Right ventricle myocardium superior (tissue), 1 donor: ENCODE measurements at regions of chr6 and their contacts with region 1.

Region 1: GRCh38 chr6:144013486-144013909 is 5.4 kb upstream of the PLAGL1 start:
- DNase-seq: peak; percentile 85
- ATAC-seq: peak; percentile 68

Region 2: GRCh38 chr6:143759666-143760065 is 253.8 kb before region 1 on chr6:
- intact Hi-C with region 1: no loop called
- DNase-seq: no peak
- ATAC-seq: no peak

Region 3: DNA sequence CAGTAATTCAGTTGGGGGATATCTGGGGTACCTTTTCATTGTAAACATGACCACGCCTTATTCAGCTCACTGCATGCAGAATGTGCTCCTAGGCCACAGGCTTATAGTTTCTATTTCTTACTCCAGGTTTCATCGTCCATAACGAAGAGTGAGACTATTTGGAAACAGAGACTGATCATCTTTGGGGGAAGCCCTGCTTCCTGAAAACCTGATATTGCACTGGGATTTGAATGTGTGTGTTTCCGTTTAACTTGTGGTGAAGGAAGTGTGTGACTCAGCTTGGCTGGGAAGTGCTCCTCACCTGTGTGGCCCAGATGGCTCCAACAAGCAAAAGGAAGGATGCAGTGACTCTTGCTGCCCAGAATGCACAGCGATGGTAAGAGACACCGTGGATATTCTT is 189.9 kb before region 1 on chr6:
- intact Hi-C with region 1: no loop called
- DNase-seq: no peak
- ATAC-seq: no peak

Region 4: DNA sequence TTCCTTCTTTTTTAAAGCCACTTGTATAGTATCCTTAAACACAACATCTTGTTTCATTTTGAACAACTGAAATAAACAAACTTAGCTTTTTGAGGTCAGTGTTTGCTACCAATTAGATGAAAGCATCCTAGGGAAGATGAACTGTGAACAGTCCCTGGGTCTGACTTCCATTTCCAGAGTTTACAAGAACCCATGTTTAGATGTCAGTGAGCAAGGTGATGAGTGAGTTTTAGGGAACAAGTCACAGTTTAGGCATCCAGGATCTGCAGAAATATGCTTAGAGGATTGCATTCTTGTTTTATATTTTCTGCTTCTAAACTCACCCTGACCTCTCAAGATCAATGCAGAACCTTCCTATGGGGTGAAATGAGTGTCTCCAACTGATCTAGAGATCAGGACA is 146.3 kb before region 1 on chr6:
- intact Hi-C with region 1: no loop called
- DNase-seq: no peak
- ATAC-seq: no peak

Region 5: GRCh38 chr6:143939364-143939763 is 74.1 kb before region 1 on chr6:
- intact Hi-C with region 1: loop called (anchors 10 kb)
- DNase-seq: no peak
- ATAC-seq: no peak

Region 6: GRCh38 chr6:143961886-143962873 is 51.3 kb before region 1 on chr6:
- intact Hi-C with region 1: no loop called
- DNase-seq: no peak
- ATAC-seq: peak; percentile 25